ENCODE measurements at regions of chr19 and their contacts with region 1.

Region 1: DNA sequence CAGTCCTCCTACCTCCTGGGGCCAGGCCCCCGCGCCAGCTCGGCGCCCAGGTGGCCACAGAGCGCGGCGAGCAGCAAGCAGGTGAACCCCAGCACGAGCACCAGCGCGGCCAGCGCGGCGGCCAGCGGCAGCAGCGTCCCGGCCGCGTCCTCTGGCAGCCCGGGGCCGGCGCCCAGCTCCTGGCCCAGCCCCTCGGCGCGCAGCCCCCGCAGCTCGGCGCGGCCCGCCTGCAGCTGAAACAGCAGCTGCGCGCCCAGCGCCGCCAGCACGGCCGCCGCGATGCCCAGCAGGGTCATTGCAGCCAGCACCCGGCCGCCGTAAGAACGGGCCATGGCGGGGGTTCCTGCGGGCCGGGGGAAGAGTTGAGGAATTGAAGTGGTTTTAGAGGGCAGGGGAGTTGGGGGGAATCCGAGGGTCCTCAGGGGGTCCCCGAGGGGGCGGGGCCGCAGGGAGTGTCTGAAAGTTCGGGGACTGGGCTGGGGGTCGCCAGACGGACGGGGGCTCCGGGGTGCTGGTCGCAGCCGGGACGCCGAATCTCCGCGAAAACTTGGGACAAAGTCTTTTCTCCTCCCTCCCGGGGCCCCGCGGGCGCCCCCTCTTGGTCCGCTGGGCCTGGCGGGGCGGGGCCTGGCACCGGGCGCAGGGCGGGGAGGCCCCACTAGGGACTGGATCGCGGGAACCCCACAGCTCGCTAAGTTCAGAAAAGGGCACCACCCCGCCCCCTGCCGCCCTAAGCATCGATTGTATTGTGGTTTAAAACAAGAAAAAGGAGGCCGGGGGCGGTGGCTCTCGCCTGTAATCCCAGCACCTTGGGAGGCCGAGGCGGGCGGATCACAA is at the start of gene TMEM221:
- DNase-seq: no peak
- ATAC-seq: peak; percentile 78
- H3K4me3 ChIP-seq: peak within 1 kb of the TSS; percentile 56 to 70
- H3K27ac ChIP-seq: peak within 1 kb of the TSS; percentile 79; the same call in 1 of the 2 replicates
- H3K4me1 ChIP-seq: peaks cover 24 to 46% of the 10 kb centered on the region in 2 experiments
- H3K27me3 ChIP-seq: no peaks in the 10 kb centered on the region
- CTCF ChIP-seq: peak; percentile 48 to 75 (median 62); a peak in 5 of 6 replicates
- POLR2A ChIP-seq: peak; percentile 31
- RAD21 ChIP-seq: no peak
- total RNA-seq, gene TMEM221: 3.4 TPM

Region 2: GRCh38 chr19:17385878-17386611 is 62.3 kb before region 1 on chr19:
- CTCF ChIA-PET with region 1: no interaction called
- POLR2A ChIA-PET with region 1: no interaction called
- RAD21 ChIA-PET with region 1: no interaction called
- intact Hi-C with region 1: no loop called
- DNase-seq: no peak
- ATAC-seq: peak; percentile 67
- H3K4me3 ChIP-seq: no peak overlapping the region
- H3K27ac ChIP-seq: no peak overlapping the region
- H3K4me1 ChIP-seq: peaks cover 19 to 31% of the 10 kb centered on the region in 2 experiments
- H3K27me3 ChIP-seq: no peaks in the 10 kb centered on the region
- CTCF ChIP-seq: peak; percentile 91 to 97 (median 96)
- POLR2A ChIP-seq: no peak
- RAD21 ChIP-seq: peak; percentile 91

Region 3: GRCh38 chr19:17580470-17581000 is 132.2 kb after region 1 on chr19:
- CTCF ChIA-PET with region 1: no interaction called
- POLR2A ChIA-PET with region 1: no interaction called
- RAD21 ChIA-PET with region 1: no interaction called
- intact Hi-C with region 1: no loop called
- DNase-seq: no peak
- ATAC-seq: no peak
- H3K4me3 ChIP-seq: no peak overlapping the region
- H3K27ac ChIP-seq: peak overlapping the region; percentile 50
- H3K4me1 ChIP-seq: peaks cover 16 to 36% of the 10 kb centered on the region in 2 experiments; a peak in 3 of 4 replicates
- H3K27me3 ChIP-seq: no peaks in the 10 kb centered on the region
- CTCF ChIP-seq: peak in 1 of 3 experiments; percentile 27; a peak in 1 of 6 replicates
- POLR2A ChIP-seq: no peak
- RAD21 ChIP-seq: no peak

Region 4: DNA sequence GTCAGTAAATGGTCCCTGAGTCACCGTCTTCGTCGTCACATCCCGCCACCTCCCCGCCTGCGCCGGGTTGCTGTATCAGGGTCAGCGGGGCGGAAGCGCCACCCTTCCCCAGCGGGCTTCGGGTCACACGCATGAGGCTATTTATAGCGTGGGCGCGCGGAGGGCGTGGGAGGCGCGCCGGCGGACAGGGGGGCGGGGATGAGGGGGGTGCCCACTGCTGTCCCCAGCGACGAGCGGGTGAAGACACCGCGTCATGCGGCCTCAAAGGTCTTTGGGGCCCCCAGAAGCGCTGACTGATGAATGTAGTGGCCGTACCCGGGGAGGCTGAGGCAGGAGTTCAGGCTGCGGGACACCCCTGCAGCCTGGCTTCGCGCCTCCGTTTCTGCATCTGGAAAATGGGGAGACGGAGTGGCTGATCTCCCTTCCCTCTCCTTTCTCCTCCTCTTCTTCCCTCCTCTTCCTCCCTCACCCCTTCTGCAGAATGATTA is 231.9 kb after region 1 on chr19:
- CTCF ChIA-PET with region 1: no interaction called
- POLR2A ChIA-PET with region 1: no interaction called
- RAD21 ChIA-PET with region 1: no interaction called
- intact Hi-C with region 1: loop called (anchors 10 kb)
- DNase-seq: peak; percentile 50
- ATAC-seq: peak; percentile 84
- H3K4me3 ChIP-seq: peak overlapping the region; percentile 37 to 62
- H3K27ac ChIP-seq: peak overlapping the region; percentile 20; the same call in 1 of the 2 replicates
- H3K4me1 ChIP-seq: peaks cover 27 to 61% of the 10 kb centered on the region in 2 experiments
- H3K27me3 ChIP-seq: no peaks in the 10 kb centered on the region
- CTCF ChIP-seq: 0 out of 6 replicates have a peak, but pooled peaks of 1 of the 3 experiments have one; percentile 12
- POLR2A ChIP-seq: no peak
- RAD21 ChIP-seq: no peak